ENCODE measurements at regions of chr5 and their contacts with region 1.

Region 1: GRCh38 chr5:74673011-74673790 is 11.8 kb upstream of the HEXB start:
- DNase-seq: peak; percentile 66
- H3K4me3 ChIP-seq: no peak overlapping the region
- H3K27ac ChIP-seq: no peak overlapping the region
- H3K4me1 ChIP-seq: no peaks in the 10 kb centered on the region
- H3K27me3 ChIP-seq: peaks cover 10% of the 10 kb centered on the region
- CTCF ChIP-seq: peak; percentile 62

Region 2: GRCh38 chr5:74446725-74447241 is 226.4 kb before region 1 on chr5:
- CTCF ChIA-PET with region 1: no interaction called
- POLR2A ChIA-PET with region 1: no interaction called
- intact Hi-C with region 1: no loop called
- DNase-seq: no peak
- H3K4me3 ChIP-seq: no peak overlapping the region
- H3K27ac ChIP-seq: no peak overlapping the region
- H3K4me1 ChIP-seq: no peaks in the 10 kb centered on the region
- H3K27me3 ChIP-seq: no peaks in the 10 kb centered on the region
- CTCF ChIP-seq: no peak

Region 3: DNA sequence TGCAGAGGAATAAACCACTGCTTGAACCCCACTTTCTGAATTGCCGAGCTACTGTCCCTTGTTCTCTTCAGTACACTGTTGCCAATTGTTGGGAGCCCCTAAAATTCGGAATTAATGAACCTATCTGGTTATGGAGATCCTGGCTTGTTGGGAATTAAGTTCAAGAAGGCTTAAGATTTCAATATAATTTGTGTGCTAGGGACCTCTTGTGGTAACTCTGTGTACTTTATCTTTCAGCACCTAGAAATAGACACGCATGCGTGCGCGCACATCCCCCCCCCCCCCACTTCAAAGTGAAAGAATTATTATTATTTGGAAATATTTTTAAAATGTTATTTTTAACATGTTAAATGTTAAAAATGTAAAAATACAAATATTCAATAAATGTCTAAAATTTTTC is 246.3 kb after region 1 on chr5:
- CTCF ChIA-PET with region 1: no interaction called
- POLR2A ChIA-PET with region 1: no interaction called
- intact Hi-C with region 1: loop called (anchors 1 kb)
- DNase-seq: peak; percentile 72
- H3K4me3 ChIP-seq: no peak overlapping the region
- H3K27ac ChIP-seq: no peak overlapping the region
- H3K4me1 ChIP-seq: no peaks in the 10 kb centered on the region
- H3K27me3 ChIP-seq: no peaks in the 10 kb centered on the region
- CTCF ChIP-seq: peak; percentile 72

Region 4: GRCh38 chr5:75053304-75054133 is 380.3 kb after region 1 on chr5:
- CTCF ChIA-PET with region 1: no interaction called
- POLR2A ChIA-PET with region 1: no interaction called
- intact Hi-C with region 1: loop called (anchors 10 kb)
- DNase-seq: peak; percentile 72
- H3K4me3 ChIP-seq: peak overlapping the region; percentile 72
- H3K27ac ChIP-seq: peak overlapping the region; percentile 73
- H3K4me1 ChIP-seq: peaks cover 14% of the 10 kb centered on the region
- H3K27me3 ChIP-seq: peaks cover 31% of the 10 kb centered on the region
- CTCF ChIP-seq: no peak

Region 5: GRCh38 chr5:75265731-75266130 is 592.5 kb after region 1 on chr5:
- CTCF ChIA-PET with region 1: interaction called, 5 read pairs
- POLR2A ChIA-PET with region 1: no interaction called
- intact Hi-C with region 1: loop called (anchors 10 kb)
- DNase-seq: peak; percentile 68
- H3K4me3 ChIP-seq: no peak overlapping the region
- H3K27ac ChIP-seq: no peak overlapping the region
- H3K4me1 ChIP-seq: no peaks in the 10 kb centered on the region
- H3K27me3 ChIP-seq: no peaks in the 10 kb centered on the region
- CTCF ChIP-seq: peak; percentile 66

Region 6: GRCh38 chr5:75336625-75337339 is 663.6 kb after region 1 on chr5 and contains the start of gene HMGCR:
- CTCF ChIA-PET with region 1: no interaction called
- POLR2A ChIA-PET with region 1: no interaction called
- intact Hi-C with region 1: no loop called
- DNase-seq: peak; percentile 99
- H3K4me3 ChIP-seq: peak within 1 kb of the TSS; percentile 99
- H3K27ac ChIP-seq: peak within 1 kb of the TSS; percentile 88
- H3K4me1 ChIP-seq: peaks cover 26% of the 10 kb centered on the region
- H3K27me3 ChIP-seq: no peaks in the 10 kb centered on the region
- CTCF ChIP-seq: no peak; the same call in 1 of the 2 replicates
- total RNA-seq, gene HMGCR: 127 and 168 TPM in 2 replicates

Measured in A673 (cell line).